ENCODE measurements at regions of chr9 and their contacts with region 1.

Region 1: GRCh38 chr9:108565651-108566378 is 290.0 kb downstream of the ACTL7B start:
- H3K4me3 ChIP-seq: no peak overlapping the region
- H3K27ac ChIP-seq: no peak overlapping the region
- H3K4me1 ChIP-seq: no peaks in the 10 kb centered on the region
- CTCF ChIP-seq: peak; percentile 60

Region 2: DNA sequence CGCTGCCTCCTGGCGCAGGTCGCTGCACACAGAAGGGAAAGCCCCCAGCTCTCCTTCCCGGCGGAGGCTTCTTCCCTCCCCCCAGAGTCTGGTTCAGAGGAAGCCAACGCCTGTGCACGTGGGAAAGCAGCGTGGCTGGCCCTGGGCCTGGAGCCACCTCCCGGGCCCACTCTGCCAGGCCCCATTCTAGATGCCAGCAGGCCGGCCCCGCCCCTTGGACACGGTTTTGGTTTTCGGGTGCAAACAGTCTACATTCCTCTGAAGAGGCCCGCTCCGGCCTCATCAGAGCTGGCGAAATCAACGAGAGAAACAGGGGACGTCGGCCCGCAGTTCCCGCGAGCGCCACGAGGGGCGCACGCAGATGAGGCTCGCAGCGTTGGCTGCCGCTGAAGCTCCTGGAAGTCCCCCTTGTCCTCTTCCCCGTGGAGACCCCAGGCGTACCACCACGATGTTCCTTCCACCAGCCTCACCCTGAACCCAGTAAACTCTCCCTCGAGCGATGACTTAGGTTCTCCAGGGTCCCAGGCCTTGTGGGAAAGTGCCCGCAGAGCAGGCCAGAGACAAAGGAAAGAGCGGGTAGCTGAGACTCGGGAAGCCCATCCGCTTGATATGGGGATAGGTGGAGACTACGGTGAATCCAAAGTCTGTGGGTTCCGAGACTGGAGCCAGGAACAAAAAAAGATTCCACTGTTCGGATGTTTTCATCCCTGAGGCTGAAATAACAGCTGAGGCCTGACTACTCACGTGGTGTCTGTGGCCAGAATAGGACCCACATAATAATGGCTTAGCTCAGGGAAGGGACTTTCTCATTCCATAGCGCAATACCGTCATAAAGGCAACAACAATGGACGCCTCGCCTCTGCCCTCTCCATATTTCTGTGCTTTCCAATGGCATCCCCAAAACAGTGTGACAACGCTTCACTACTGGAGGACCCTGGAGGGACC is 1140.4 kb before region 1 on chr9:
- CTCF ChIA-PET with region 1: interaction called, 29 read pairs
- POLR2A ChIA-PET with region 1: no interaction called
- H3K4me3 ChIP-seq: no peak overlapping the region
- H3K27ac ChIP-seq: no peak overlapping the region
- H3K4me1 ChIP-seq: 0 out of 2 replicates have a peak, but pooled peaks cover 2% of the 10 kb centered on the region
- CTCF ChIP-seq: 0 out of 2 replicates have a peak, but pooled peaks have one; percentile 22

Region 3: DNA sequence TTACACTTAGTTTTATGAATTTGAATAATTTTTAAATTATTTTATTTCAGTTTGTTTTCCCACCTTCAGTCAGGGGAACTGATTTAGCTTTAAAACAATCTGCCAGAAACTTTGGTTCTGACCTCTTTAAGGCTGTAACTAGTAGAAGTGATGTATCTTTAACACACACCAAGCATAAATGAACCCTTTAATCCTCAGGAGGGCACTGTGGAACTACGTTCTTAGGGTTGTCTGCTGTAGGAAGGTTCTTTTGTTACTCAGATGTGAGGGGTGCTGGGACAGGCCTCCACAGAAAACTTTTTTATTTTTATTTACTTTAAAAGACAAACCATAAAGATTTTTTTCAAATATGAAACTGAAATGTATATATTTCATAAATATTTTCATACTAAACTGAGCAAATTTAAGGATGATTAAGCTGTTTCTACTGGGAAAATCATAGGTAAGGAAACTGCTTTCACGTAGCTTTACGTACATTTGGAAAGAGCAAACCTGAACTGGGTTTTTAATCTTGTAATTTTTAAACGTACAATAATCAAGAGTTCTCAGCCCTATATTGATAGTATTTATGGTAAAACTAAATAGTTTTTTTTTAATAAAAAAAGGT is 1081.6 kb before region 1 on chr9:
- CTCF ChIA-PET with region 1: interaction called, 12 read pairs
- POLR2A ChIA-PET with region 1: no interaction called
- H3K4me3 ChIP-seq: no peak overlapping the region
- H3K27ac ChIP-seq: no peak overlapping the region
- H3K4me1 ChIP-seq: peaks cover 4% of the 10 kb centered on the region; the same call in 1 of the 2 replicates
- CTCF ChIP-seq: no peak

Region 4: DNA sequence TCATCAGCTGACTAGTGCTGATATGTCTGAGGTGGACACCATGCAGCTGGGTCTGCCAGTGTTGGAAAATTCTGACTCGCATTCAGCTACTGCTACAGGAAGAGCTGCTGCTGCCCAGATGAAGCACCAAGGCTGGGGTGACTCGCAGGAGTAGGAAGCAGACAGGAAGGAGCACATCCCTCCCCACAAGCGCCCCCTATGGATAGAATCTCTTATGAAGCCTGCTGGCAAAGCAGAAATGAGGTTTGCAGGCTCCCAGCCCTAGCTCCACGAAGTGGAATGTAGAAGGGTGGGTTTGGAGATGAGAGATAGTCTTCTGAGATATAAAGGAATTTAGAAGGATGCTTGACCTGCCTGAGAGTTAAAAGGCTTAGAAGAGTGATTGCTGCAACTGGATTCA is 153.1 kb before region 1 on chr9:
- CTCF ChIA-PET with region 1: interaction called, 11 read pairs
- POLR2A ChIA-PET with region 1: no interaction called
- H3K4me3 ChIP-seq: no peak overlapping the region
- H3K27ac ChIP-seq: no peak overlapping the region
- H3K4me1 ChIP-seq: no peaks in the 10 kb centered on the region; the same call in 1 of the 2 replicates
- CTCF ChIP-seq: no peak

Region 5: GRCh38 chr9:108468402-108468801 is 97.4 kb before region 1 on chr9:
- CTCF ChIA-PET with region 1: interaction called, 31 read pairs
- POLR2A ChIA-PET with region 1: no interaction called
- H3K4me3 ChIP-seq: no peak overlapping the region
- H3K27ac ChIP-seq: no peak overlapping the region
- H3K4me1 ChIP-seq: no peaks in the 10 kb centered on the region
- CTCF ChIP-seq: no peak

Region 6: GRCh38 chr9:108654566-108654965 is 88.8 kb after region 1 on chr9:
- CTCF ChIA-PET with region 1: no interaction called
- POLR2A ChIA-PET with region 1: no interaction called
- H3K4me3 ChIP-seq: no peak overlapping the region
- H3K27ac ChIP-seq: no peak overlapping the region
- H3K4me1 ChIP-seq: no peaks in the 10 kb centered on the region
- CTCF ChIP-seq: no peak

Measured in HEK293 (cell line).